K562 (cell line): ENCODE measurements at regions of chr11 and their contacts with region 1.

Region 1: GRCh38 chr11:2689651-2690575 is 9.9 kb downstream of the KCNQ1OT1 start:
- DNase-seq: no peak
- ATAC-seq: no peak; the same call in 2 of the 3 replicates
- H3K4me3 ChIP-seq: no peak overlapping the region
- H3K27ac ChIP-seq: no peak overlapping the region
- H3K4me1 ChIP-seq: peaks cover 2 to 11% of the 10 kb centered on the region in 2 experiments; a peak in 3 of 5 replicates
- H3K27me3 ChIP-seq: no peaks in the 10 kb centered on the region
- CTCF ChIP-seq: no peak
- EP300 ChIP-seq: no peak
- POLR2A ChIP-seq: no peak
- RAD21 ChIP-seq: no peak

Region 2: DNA sequence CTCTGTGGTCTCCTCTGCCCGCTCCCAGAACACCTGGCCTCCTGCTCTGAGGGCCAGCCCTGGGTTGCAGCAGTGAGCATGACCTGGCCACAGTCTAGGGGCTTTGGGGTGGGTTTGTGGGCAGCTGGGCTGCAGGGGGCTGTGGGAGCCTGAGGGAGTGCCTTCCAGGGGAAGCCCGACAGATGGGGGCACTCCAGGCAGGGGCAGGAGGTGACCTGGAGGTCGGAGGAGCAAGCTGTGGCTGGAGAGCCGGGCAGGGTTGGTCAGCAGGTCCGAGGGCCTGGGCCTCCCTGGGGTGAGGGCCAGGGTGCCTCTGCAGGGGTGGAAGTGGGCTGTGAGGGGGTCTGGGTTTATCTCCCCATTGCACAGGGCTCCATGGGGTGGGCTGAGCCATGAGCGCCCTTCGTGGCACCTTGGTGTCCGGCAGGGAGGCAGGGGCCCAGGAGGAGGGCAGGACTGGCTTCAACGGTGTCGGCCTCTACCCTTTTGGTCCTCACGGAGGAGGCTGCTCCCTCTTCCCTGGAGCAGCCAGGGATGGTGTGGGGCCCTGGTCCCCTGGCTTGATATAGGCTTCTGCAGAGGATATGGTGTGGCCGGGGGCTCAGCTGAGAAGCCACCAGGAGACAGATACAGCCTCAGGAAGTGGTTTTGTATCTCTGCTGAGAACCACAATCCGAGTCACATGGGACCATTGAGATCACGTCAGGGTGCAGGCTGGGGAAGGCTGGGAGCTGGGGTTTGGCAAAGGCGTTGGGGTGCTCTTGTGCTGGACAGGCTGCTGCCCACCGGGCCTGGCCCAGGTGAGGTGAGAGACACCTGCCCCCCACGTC is 222.8 kb before region 1 on chr11:
- CTCF ChIA-PET with region 1: no interaction called
- POLR2A ChIA-PET with region 1: no interaction called
- in situ Hi-C with region 1: no loop called
- intact Hi-C with region 1: no loop called
- DNase-seq: peak in 2 of 4 experiments; percentile 5 to 10
- ATAC-seq: peak; percentile 39; the same call in 2 of the 3 replicates
- H3K4me3 ChIP-seq: no peak overlapping the region
- H3K27ac ChIP-seq: no peak overlapping the region
- H3K4me1 ChIP-seq: peaks cover 0 to 23% of the 10 kb centered on the region in 2 experiments; a peak in 2 of 5 replicates
- H3K27me3 ChIP-seq: peaks cover 17 to 74% of the 10 kb centered on the region in 2 experiments; a peak in 4 of 5 replicates
- CTCF ChIP-seq: no peak
- EP300 ChIP-seq: no peak
- POLR2A ChIP-seq: no peak
- RAD21 ChIP-seq: no peak

Region 3: DNA sequence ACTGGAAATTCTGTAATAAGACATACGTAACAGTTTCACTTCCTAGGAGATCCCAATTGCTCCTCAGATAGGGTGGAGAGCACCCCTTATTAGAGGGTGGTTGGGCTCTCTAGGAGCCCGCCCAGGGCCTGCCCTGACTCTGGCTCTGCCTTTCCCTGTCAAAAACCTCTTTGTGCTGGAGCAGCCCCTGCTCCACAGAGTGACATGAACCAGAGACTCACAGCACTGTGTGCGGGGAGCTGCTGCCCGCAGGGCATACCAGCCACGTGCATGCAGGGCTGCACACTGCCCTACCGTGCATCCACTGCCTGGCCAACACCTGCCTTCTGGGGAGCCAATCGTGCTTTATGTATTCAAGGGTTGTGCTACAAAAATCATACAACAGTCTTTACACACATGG is 14.4 kb before region 1 on chr11:
- CTCF ChIA-PET with region 1: no interaction called
- POLR2A ChIA-PET with region 1: interaction called, 11 read pairs
- in situ Hi-C with region 1: no loop called
- intact Hi-C with region 1: no loop called
- DNase-seq: no peak
- ATAC-seq: no peak
- H3K4me3 ChIP-seq: no peak overlapping the region
- H3K27ac ChIP-seq: no peak overlapping the region
- H3K4me1 ChIP-seq: peaks cover 0 to 8% of the 10 kb centered on the region in 2 experiments; a peak in 1 of 5 replicates
- H3K27me3 ChIP-seq: no peaks in the 10 kb centered on the region
- CTCF ChIP-seq: no peak
- EP300 ChIP-seq: no peak
- POLR2A ChIP-seq: no peak
- RAD21 ChIP-seq: no peak